CD8-positive, alpha-beta T cell (primary cell): ENCODE measurements at regions of chr21 and their contacts with region 1.

Region 1: DNA sequence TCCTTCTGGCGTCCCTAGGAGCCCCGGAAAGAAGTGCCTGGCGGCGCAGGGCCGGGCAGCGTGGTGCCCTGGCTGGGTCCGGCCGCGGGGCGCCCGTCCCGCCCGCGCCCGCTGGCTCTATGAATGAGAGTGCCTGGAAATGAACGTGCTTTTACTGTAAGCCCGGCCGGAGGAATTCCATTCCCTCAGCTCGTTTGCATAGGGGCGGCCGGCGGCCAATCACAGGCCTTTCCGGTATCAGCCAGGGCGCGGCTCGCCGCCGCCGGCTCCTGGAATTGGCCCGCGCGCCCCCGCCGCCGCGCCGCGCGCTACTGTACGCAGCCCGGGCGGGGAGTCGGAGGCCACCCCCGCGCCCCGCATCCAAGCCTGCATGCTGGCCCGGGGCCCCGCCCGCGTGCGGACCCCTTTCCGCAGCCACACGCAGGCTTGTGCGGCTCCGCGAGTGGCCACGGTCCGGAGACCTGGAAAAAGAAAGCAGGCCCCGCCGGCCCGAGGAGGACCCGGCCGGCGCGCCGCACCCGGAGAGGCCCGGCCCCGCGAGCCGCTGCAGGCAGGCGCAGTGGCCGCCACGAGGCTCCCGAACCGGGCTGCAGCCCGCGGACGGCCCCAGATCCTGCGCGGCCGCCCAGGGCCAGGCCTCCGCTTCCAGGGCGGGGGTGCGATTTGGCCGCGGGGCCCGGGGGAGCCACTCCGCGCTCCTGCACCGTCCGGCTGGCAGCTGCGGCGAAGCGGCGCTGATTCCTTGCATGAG is 160.4 kb downstream of the RUNX1 start:
- DNase-seq: peak; percentile 33 to 88 (median 70)
- ATAC-seq: peak; percentile 28
- H3K4me3 ChIP-seq: peak overlapping the region; percentile 72 to 77
- H3K4me3 Mint-ChIP-seq: peak overlapping the region; percentile 90
- H3K27ac ChIP-seq: peak overlapping the region; percentile 58 to 78
- H3K27ac Mint-ChIP-seq: peak overlapping the region; percentile 94
- H3K4me1 ChIP-seq: peaks cover 34% of the 10 kb centered on the region
- H3K4me1 Mint-ChIP-seq: peaks cover 51% of the 10 kb centered on the region
- H3K27me3 ChIP-seq: no peaks in the 10 kb centered on the region
- H3K27me3 Mint-ChIP-seq: no peaks in the 10 kb centered on the region
- CTCF ChIP-seq: no peak

Region 2: DNA sequence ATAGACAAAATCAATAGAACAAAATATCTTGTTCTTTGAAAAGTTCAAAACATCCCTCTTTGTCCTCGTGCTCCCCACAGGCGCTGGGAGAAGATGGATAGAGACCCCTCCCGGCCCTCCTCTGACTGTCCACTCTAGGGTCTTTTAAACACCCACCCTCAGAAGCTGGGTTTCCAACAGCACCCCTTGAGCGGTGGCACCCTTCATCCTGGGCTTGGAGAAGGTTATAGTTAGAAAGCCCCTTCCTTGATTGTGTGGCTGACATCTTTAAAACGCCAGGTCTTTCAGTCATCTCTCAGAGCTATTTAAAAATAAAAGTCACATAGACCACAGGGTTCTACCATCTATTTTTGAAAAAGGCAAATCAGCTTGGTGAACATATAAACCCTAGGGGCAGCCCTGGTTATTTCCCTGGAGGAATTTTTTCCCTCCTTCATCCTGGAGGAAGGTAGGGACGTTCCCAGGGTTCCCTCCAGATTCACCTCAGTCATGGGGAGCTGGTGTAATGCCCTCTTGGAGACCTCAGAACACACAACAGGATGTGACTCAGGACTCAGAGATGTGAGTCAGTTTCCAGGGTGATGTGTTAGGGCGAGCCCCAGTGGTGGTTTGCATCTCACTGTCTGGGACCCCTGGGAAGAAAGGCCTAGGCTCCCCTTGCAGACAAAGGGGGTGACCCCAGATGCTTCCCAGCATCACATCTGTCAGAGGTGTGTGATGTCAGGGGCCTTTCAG is 81.4 kb before region 1 on chr21:
- CTCF ChIA-PET with region 1: no interaction called
- POLR2A ChIA-PET with region 1: no interaction called
- intact Hi-C with region 1: loop called in 1 of 2 experiments (anchors 5 kb)
- DNase-seq: peak in 8 of 9 experiments; percentile 45 to 87 (median 66)
- ATAC-seq: peak; percentile 86
- H3K4me3 ChIP-seq: no peak overlapping the region
- H3K4me3 Mint-ChIP-seq: no peak overlapping the region
- H3K27ac ChIP-seq: peak overlapping the region; percentile 12 to 84
- H3K27ac Mint-ChIP-seq: peak overlapping the region; percentile 92
- H3K4me1 ChIP-seq: peaks cover 44% of the 10 kb centered on the region
- H3K4me1 Mint-ChIP-seq: peaks cover 70% of the 10 kb centered on the region
- H3K27me3 ChIP-seq: no peaks in the 10 kb centered on the region
- H3K27me3 Mint-ChIP-seq: no peaks in the 10 kb centered on the region
- CTCF ChIP-seq: no peak

Region 3: DNA sequence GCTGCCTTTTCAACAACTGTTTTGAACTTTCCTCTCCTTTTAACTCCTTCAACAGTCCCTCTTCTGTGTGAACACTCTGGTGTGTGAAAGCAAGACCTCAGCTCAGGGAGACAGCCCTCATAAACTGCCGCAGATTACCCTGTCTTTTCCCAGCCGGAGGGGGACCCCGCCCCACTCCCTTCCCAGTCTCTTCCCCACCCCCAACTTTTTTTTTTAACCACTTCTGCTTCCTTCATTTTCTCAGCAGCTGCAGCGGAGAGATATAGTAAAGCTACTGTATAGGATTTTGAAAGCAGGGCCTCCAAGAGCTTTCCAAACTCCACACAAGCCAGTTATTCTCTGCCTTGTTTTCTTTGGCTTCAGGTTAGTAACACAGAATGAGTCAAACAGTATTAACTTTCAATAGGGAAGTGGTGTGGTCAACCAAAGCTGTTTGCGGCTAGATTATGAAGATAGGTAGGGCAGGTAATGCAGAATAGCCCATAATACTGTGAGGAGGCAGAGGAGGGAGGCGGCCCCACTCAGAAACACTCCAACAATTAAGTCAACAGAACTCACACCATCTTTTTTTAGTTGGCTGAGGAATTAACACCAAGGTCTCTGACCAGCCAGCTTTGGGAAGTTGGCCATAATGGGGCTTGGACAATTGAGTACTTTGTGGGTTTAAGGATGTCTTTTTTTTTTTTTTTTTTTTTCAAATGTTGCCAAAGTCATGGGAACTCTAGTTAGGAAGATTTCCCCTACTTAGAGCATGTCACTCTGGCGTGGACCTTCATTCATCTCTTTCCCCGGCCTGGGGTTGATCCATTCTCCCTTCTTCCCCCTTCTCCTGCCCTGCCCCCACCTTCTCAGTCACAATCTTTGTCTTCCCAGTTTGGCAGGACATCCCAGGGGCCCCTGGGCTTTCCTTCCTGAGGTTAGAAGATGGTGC is 43.0 kb before region 1 on chr21:
- CTCF ChIA-PET with region 1: no interaction called
- POLR2A ChIA-PET with region 1: no interaction called
- intact Hi-C with region 1: no loop called
- DNase-seq: peak in 2 of 9 experiments; percentile 56 to 64
- ATAC-seq: no peak
- H3K4me3 ChIP-seq: no peak overlapping the region
- H3K4me3 Mint-ChIP-seq: peak overlapping the region; percentile 30
- H3K27ac ChIP-seq: no peak overlapping the region
- H3K27ac Mint-ChIP-seq: peak overlapping the region; percentile 50
- H3K4me1 ChIP-seq: peaks cover 12% of the 10 kb centered on the region
- H3K4me1 Mint-ChIP-seq: peaks cover 36% of the 10 kb centered on the region
- H3K27me3 ChIP-seq: no peaks in the 10 kb centered on the region
- H3K27me3 Mint-ChIP-seq: no peaks in the 10 kb centered on the region
- CTCF ChIP-seq: no peak

Region 4: GRCh38 chr21:34933609-34934335 is 45.0 kb after region 1 on chr21:
- CTCF ChIA-PET with region 1: interaction called, 18 read pairs
- POLR2A ChIA-PET with region 1: interaction called, 10 read pairs
- intact Hi-C with region 1: loop called (anchors 1 to 2 kb)
- DNase-seq: peak in 4 of 9 experiments; percentile 10 to 87 (median 64)
- ATAC-seq: peak; percentile 88
- H3K4me3 ChIP-seq: peak overlapping the region; percentile 7 to 29
- H3K4me3 Mint-ChIP-seq: peak overlapping the region; percentile 80
- H3K27ac ChIP-seq: peak overlapping the region; percentile 39 to 90
- H3K27ac Mint-ChIP-seq: peak overlapping the region; percentile 99
- H3K4me1 ChIP-seq: peaks cover 60% of the 10 kb centered on the region
- H3K4me1 Mint-ChIP-seq: peaks cover 83% of the 10 kb centered on the region
- H3K27me3 ChIP-seq: no peaks in the 10 kb centered on the region
- H3K27me3 Mint-ChIP-seq: no peaks in the 10 kb centered on the region
- CTCF ChIP-seq: no peak

Region 5: DNA sequence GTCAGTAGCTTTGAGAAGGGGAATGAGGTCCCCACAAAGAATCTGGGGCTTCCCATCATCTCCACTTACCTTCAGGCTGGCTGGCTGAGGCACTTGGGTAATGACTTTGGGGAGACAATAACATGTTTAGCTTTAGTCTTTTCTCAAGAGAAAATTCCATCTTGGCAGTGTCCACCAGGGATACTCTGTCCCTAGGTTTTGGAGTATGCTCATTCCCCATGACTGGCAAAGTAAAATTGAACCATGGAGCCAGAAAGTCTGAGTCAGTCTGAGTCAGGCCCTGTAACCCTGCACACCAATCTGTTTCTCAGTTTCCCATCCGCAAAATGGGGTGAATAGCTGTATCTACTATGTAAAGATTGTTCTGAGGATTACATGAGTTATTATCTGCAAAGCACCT is 132.2 kb after region 1 on chr21:
- CTCF ChIA-PET with region 1: interaction called, 11 read pairs
- POLR2A ChIA-PET with region 1: interaction called, 18 read pairs
- intact Hi-C with region 1: loop called in 1 of 2 experiments (anchors 1 kb)
- DNase-seq: no peak
- ATAC-seq: no peak
- H3K4me3 ChIP-seq: no peak overlapping the region
- H3K4me3 Mint-ChIP-seq: no peak overlapping the region
- H3K27ac ChIP-seq: peak overlapping the region in 1 of 2 experiments; percentile 46
- H3K27ac Mint-ChIP-seq: peak overlapping the region; percentile 75
- H3K4me1 ChIP-seq: peaks cover 71% of the 10 kb centered on the region
- H3K4me1 Mint-ChIP-seq: peaks cover 92% of the 10 kb centered on the region
- H3K27me3 ChIP-seq: no peaks in the 10 kb centered on the region
- H3K27me3 Mint-ChIP-seq: no peaks in the 10 kb centered on the region
- CTCF ChIP-seq: no peak

Region 6: GRCh38 chr21:35138665-35139381 is 250.1 kb after region 1 on chr21:
- CTCF ChIA-PET with region 1: no interaction called
- POLR2A ChIA-PET with region 1: no interaction called
- intact Hi-C with region 1: loop called (anchors 5 kb)
- DNase-seq: peak in 8 of 9 experiments; percentile 12 to 71 (median 56)
- ATAC-seq: peak; percentile 95
- H3K4me3 ChIP-seq: peak overlapping the region; percentile 2 to 35
- H3K4me3 Mint-ChIP-seq: peak overlapping the region; percentile 58
- H3K27ac ChIP-seq: no peak overlapping the region
- H3K27ac Mint-ChIP-seq: peak overlapping the region; percentile 43
- H3K4me1 ChIP-seq: peaks cover 13% of the 10 kb centered on the region
- H3K4me1 Mint-ChIP-seq: peaks cover 16% of the 10 kb centered on the region
- H3K27me3 ChIP-seq: no peaks in the 10 kb centered on the region
- H3K27me3 Mint-ChIP-seq: no peaks in the 10 kb centered on the region
- CTCF ChIP-seq: no peak

Region 7: DNA sequence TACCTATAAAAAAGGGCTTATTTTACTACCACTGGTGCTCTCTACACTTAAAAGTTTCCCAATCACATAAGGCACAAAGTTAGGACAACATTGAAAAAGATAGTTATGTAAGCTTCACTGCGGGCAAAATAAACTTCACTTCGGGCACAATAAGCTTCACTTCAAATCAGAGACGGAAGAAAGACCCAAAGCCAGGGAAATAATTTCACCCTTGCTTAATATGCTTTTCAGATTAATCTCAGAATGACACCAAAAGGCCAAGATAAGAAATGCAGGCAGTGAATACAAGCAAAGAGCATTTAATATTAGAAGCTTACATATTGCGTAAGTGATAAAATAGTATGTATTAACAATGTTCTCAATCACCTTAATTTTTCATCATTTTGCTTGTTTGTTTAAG is 727.3 kb after region 1 on chr21:
- CTCF ChIA-PET with region 1: no interaction called
- POLR2A ChIA-PET with region 1: no interaction called
- intact Hi-C with region 1: loop called in 1 of 2 experiments (anchors 5 kb)
- DNase-seq: peak in 2 of 9 experiments; percentile 11 to 24
- ATAC-seq: no peak
- H3K4me3 ChIP-seq: no peak overlapping the region
- H3K4me3 Mint-ChIP-seq: no peak overlapping the region
- H3K27ac ChIP-seq: no peak overlapping the region
- H3K27ac Mint-ChIP-seq: no peak overlapping the region
- H3K4me1 ChIP-seq: no peaks in the 10 kb centered on the region
- H3K4me1 Mint-ChIP-seq: peaks cover 2% of the 10 kb centered on the region
- H3K27me3 ChIP-seq: no peaks in the 10 kb centered on the region
- H3K27me3 Mint-ChIP-seq: no peaks in the 10 kb centered on the region
- CTCF ChIP-seq: peak; percentile 28